ENCODE measurements at regions of chr3 and their contacts with region 1.

Region 1: DNA sequence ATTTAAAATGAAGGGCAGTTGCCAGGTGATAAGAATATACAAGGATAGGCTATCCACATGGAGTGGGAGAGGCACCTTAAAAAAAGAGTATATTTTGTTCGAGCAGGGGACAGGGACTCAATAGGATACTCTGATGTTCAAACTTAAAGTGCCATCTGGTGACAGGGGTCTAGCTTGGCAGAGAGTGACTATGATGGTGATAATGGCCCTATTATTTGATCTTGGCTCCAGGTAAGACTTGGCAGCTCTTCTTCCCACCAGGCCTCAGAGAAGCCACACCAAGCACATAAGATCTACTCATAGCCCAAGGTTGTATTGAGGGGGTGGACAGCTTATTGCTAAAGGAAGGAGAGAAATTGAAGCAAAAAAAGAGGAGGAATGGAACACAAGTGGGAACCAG is 109.0 kb upstream of the MANF start:
- H3K4me3 Mint-ChIP-seq: no peak overlapping the region
- H3K27ac Mint-ChIP-seq: no peak overlapping the region
- H3K4me1 Mint-ChIP-seq: no peaks in the 10 kb centered on the region
- H3K27me3 Mint-ChIP-seq: no peaks in the 10 kb centered on the region

Region 2: DNA sequence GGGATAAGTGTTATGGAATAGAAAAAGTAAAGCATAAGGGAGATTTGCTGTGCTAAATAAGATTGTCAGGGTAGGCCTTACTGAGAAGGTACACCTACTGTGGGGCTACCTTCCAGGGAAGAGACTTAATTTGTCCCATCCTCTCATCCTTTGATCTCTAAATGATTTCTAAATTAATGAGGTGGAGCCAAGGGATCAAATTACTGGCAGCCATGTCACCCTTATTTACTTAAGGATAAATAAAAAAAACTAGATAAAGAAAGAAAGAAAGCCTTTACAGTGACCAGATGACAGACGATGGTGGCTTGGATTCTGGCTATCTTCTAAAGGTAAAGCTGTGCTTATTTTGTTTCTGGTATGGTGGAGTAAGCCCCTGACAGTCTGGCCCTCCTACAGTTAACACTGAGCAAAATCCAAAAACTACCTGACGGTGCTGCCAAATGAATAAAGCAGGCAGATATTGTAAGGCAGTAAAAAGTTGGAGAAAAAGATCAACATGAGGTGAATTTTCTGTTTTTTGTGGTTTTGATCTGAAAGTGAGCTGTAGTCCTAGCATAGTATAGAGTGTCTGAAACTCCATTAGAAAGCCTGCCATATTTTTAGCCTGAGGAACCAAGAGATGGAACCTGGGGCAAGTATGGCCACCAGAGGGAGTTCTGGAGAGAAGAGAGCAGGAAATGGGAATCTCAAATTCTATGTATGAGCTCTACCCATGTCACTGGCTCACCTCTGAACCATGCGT is 176.1 kb before region 1 on chr3:
- intact Hi-C with region 1: loop called (anchors 2 kb)
- H3K4me3 Mint-ChIP-seq: no peak overlapping the region
- H3K27ac Mint-ChIP-seq: no peak overlapping the region
- H3K4me1 Mint-ChIP-seq: no peaks in the 10 kb centered on the region
- H3K27me3 Mint-ChIP-seq: peaks cover 2% of the 10 kb centered on the region